WTC11 (cell line): ENCODE measurements at regions of chr15 and their contacts with region 1.

Region 1: GRCh38 chr15:44584162-44584749 is 47.3 kb downstream of the EIF3J start:
- DNase-seq: peak; percentile 67
- ATAC-seq: peak; percentile 98
- H3K4me3 Mint-ChIP-seq: no peak overlapping the region
- H3K27ac Mint-ChIP-seq: no peak overlapping the region
- H3K4me1 Mint-ChIP-seq: no peaks in the 10 kb centered on the region
- H3K27me3 Mint-ChIP-seq: no peaks in the 10 kb centered on the region
- CTCF ChIP-seq: 0 out of 2 replicates have a peak, but pooled peaks have one; percentile 27

Region 2: DNA sequence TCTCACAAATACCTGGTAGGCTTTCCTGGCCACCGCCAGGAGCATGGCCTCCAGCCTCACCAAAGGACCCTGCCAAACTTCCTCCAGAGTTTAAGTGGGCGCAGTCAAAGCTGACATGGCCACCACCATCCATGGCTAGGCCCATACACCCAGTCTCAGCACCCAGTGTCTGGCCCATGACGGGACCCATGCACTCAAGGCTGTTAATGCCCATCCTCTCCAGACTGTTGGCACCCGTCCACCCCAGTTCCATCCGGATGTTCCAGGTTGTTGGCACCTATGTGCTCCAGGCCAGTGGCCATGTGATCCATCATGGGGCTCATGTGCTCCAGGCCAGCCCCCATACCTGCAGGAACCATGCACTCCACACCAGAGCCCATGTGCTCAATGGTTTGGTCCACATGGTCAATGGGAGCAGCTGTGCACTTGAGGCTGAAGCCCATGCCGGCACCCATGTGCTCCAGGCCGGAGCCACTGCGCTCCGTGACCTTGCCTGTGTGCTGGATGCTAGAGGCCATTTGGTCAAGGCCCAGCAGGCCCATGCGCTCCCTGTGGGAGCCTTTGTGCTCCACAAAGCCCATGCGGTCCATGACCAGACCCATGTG is 136.4 kb before region 1 on chr15:
- CTCF ChIA-PET with region 1: no interaction called
- POLR2A ChIA-PET with region 1: no interaction called
- DNase-seq: no peak
- ATAC-seq: no peak
- H3K4me3 Mint-ChIP-seq: no peak overlapping the region
- H3K27ac Mint-ChIP-seq: no peak overlapping the region
- H3K4me1 Mint-ChIP-seq: peaks cover 7% of the 10 kb centered on the region
- H3K27me3 Mint-ChIP-seq: no peaks in the 10 kb centered on the region
- CTCF ChIP-seq: no peak

Region 3: GRCh38 chr15:44489464-44489863 is 94.8 kb before region 1 on chr15:
- CTCF ChIA-PET with region 1: no interaction called
- POLR2A ChIA-PET with region 1: no interaction called
- DNase-seq: no peak
- ATAC-seq: no peak
- H3K4me3 Mint-ChIP-seq: no peak overlapping the region
- H3K27ac Mint-ChIP-seq: 0 out of 2 replicates have a peak overlapping the region, but pooled peaks have one; percentile 8
- H3K4me1 Mint-ChIP-seq: no peaks in the 10 kb centered on the region
- H3K27me3 Mint-ChIP-seq: no peaks in the 10 kb centered on the region
- CTCF ChIP-seq: no peak

Region 4: DNA sequence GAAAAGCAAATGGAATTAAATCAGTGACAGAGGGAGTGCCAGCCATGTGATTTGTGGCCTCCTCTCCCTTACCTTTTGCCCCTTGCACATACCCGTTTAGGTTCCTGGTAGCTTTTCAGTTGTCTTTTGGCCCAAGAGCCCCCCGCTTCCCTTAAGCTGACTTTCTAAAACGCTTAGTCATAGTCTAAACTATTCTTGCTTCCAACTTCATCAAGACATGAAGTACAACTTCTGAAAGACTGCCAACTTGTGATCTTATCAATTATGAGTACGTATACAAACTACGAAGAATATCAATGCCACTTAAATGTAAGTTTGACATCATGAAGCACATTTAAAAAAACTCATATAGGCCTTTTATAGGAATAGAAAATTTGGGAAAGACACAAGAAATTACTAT is 14.6 kb after region 1 on chr15:
- CTCF ChIA-PET with region 1: interaction called, 11 read pairs
- POLR2A ChIA-PET with region 1: no interaction called
- DNase-seq: no peak
- ATAC-seq: no peak
- H3K4me3 Mint-ChIP-seq: no peak overlapping the region
- H3K27ac Mint-ChIP-seq: no peak overlapping the region
- H3K4me1 Mint-ChIP-seq: no peaks in the 10 kb centered on the region
- H3K27me3 Mint-ChIP-seq: no peaks in the 10 kb centered on the region
- CTCF ChIP-seq: no peak

Region 5: GRCh38 chr15:44606740-44607139 is 22.5 kb after region 1 on chr15:
- CTCF ChIA-PET with region 1: interaction called, 14 read pairs
- POLR2A ChIA-PET with region 1: no interaction called
- DNase-seq: no peak
- ATAC-seq: no peak
- H3K4me3 Mint-ChIP-seq: no peak overlapping the region
- H3K27ac Mint-ChIP-seq: no peak overlapping the region
- H3K4me1 Mint-ChIP-seq: no peaks in the 10 kb centered on the region
- H3K27me3 Mint-ChIP-seq: no peaks in the 10 kb centered on the region
- CTCF ChIP-seq: no peak

Region 6: DNA sequence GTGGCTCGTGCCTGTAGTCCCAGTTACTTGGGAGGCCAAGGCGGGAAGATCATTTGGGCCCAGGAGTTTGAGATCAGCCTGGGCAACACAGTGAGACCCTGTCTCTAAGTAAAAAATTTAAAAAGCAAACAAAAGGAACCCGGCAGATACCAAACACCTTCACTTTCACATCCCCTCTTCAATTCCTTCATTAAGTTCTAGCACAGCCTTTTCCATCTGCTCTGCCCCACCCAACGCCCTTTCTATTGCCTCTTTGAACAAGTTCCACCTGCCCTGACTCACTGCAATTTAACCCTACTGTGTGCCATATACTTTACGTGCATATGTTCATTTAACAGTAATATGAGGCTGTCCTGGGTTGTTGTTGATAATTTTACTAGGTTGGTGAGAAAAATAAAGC is 91.7 kb after region 1 on chr15:
- CTCF ChIA-PET with region 1: no interaction called
- POLR2A ChIA-PET with region 1: no interaction called
- DNase-seq: no peak
- ATAC-seq: no peak
- H3K4me3 Mint-ChIP-seq: no peak overlapping the region
- H3K27ac Mint-ChIP-seq: no peak overlapping the region
- H3K4me1 Mint-ChIP-seq: no peaks in the 10 kb centered on the region; the same call in 1 of the 2 replicates
- H3K27me3 Mint-ChIP-seq: peaks cover 9% of the 10 kb centered on the region
- CTCF ChIP-seq: no peak

Region 7: GRCh38 chr15:44738340-44738984 is 154.2 kb after region 1 on chr15:
- CTCF ChIA-PET with region 1: interaction called, 17 read pairs
- POLR2A ChIA-PET with region 1: interaction called, 5 read pairs
- DNase-seq: no peak
- ATAC-seq: no peak
- H3K4me3 Mint-ChIP-seq: no peak overlapping the region
- H3K27ac Mint-ChIP-seq: no peak overlapping the region
- H3K4me1 Mint-ChIP-seq: peaks cover 8% of the 10 kb centered on the region
- H3K27me3 Mint-ChIP-seq: peaks cover 14% of the 10 kb centered on the region
- CTCF ChIP-seq: no peak